Posterior vena cava (tissue), 2 donors: ENCODE measurements at regions of chr1 and their contacts with region 1.

Region 1: DNA sequence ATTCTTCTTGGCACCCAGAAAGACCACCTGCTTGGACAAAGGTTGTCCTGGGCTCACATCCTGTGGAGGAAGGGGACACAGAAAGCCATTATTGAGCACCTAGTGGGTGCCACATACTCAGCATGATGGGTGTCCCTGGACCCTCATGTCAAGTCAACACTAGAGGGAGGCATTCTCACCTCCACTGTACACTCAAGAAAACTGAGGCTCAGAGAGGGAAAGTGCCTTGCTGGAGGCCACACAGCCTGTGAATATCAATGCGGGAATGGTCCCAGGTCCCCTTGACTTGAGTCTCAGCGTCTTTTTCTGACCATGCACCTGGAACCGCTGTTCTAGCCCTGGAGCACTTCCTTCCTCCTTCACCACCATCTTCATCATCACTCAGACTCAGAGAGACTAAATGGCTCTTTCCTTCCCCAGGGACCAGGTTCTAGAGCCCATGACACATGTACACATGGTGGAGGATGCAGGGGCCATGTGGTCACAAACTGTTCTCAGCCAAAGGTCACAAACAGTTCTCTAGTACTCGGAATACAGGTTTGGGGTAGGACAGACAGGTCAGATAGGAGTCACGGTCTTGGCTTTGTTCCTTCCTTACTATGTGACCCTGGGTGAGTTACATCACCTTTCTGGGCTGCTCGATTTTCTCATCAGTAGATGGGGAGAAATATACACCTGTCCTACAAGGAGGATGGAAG is 89.2 kb upstream of the WNT4 start:
- DNase-seq: no peak

Region 2: GRCh38 chr1:21072721-21073120 is 1159.4 kb before region 1 on chr1:
- intact Hi-C with region 1: loop called in 1 of 2 experiments (anchors 5 kb)
- DNase-seq: no peak

Region 3: GRCh38 chr1:22208235-22208972 is 23.7 kb before region 1 on chr1:
- intact Hi-C with region 1: no loop called
- DNase-seq: peak; percentile 51